PC-3 (cell line): ENCODE measurements at regions of chr17 and their contacts with region 1.

Region 1: DNA sequence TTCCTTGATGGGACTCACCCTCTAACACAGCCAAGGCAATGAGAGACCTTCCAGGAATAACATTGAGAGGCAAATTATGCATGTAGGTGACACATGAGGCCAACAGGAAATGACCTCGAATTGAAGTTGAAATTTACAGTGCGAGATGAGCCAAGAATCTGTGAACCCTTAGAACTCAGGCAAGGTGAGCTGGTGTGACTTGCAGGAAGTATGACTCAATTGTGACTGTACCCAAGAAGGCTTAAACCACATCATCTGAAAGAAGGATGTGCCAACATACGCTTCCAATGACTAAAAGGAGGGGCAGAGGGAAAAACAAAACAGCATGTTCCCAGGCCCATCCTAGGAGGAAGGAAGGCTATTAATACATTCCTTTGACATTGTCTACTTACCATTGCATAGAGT is 44.8 kb downstream of the PITPNC1 start:
- DNase-seq: peak; percentile 100
- ATAC-seq: peak; percentile 97
- H3K4me3 ChIP-seq: no peak overlapping the region
- H3K27ac ChIP-seq: peak overlapping the region; percentile 96
- H3K4me1 ChIP-seq: peaks cover 29% of the 10 kb centered on the region
- H3K27me3 ChIP-seq: no peaks in the 10 kb centered on the region
- CTCF ChIP-seq: no peak

Region 2: DNA sequence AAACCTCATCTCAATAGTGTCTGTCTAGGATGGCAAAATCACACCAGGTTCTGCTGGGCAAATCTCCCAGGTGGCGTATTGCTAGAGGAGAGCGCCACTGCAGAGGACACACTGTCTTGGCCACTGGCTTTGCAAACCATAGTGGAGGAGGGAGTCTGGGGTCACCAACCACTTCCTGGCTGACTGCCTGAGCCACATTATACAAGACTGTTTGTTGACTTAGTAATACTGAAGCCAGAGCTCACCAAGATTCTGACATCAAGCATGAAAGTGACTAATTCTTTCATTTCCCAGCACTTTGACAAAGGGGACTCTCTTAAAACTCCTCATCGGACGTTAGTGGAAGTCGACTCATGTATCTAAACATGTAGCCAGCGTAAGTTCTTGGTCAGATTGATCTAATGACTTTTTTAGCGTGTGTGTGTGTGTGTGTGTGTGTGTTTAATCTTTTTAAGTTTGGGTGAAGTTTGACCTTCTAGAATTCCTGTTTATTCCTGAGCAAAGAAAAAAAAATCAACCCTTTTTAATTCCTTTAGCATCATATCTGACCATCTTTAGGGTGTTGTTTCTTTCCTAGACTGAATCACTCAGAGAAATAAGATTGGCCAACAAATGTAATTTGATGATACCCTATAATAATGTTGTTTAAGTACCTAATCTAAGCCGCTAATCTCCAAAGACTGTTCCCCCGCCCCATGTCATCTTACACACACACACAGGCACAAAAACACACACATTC is 31.1 kb before region 1 on chr17:
- CTCF ChIA-PET with region 1: no interaction called
- POLR2A ChIA-PET with region 1: no interaction called
- intact Hi-C with region 1: loop called (anchors 1 kb)
- DNase-seq: peak; percentile 99
- ATAC-seq: peak; percentile 96
- H3K4me3 ChIP-seq: no peak overlapping the region
- H3K27ac ChIP-seq: peak overlapping the region; percentile 93
- H3K4me1 ChIP-seq: peaks cover 22% of the 10 kb centered on the region
- H3K27me3 ChIP-seq: no peaks in the 10 kb centered on the region
- CTCF ChIP-seq: peak; percentile 40

Region 3: DNA sequence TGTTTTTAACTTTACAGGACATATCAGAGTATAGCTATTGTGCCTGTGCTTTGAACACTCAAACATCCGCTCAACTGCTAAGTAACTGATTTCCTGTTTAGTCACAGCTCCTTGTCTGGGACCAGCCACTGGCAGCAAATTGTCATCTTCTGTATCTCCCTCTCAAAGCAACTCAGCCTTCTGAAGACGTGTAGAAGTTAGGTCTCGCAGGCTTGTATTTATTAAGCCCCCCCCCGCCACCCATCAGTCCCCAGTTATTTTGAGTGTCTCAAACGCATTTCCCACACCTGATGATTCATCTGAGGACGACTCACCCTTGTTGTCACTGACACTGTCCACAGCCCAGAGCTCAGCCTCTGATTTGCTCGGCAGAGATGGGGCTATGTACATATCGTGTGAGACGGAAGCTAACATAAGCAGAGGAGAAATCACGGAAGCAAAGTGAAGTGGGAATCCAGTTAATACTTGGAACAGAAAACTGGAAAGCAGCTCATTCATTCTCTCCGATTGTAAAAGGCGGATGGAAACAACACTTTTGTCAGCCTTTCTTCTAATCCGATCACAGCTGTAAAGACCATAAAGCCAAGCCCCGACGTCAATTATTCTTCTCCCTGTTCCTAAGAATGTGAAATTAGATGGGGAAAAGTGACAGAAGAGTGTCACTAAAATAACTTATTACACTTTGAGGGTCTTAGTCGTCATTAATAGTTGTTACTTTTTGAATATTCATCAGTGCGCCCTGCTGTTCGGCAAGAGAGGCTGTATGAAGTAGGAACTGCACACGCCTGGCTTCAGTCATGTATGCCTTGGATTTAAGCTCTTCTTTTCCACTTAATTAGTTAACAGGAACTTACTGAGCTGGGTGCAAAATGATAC is 19.4 kb after region 1 on chr17:
- CTCF ChIA-PET with region 1: no interaction called
- POLR2A ChIA-PET with region 1: interaction called, 11 read pairs
- intact Hi-C with region 1: loop called (anchors 1 kb)
- DNase-seq: peak; percentile 89
- ATAC-seq: peak; percentile 97
- H3K4me3 ChIP-seq: peak overlapping the region; percentile 38
- H3K27ac ChIP-seq: peak overlapping the region; percentile 91
- H3K4me1 ChIP-seq: peaks cover 17% of the 10 kb centered on the region
- H3K27me3 ChIP-seq: no peaks in the 10 kb centered on the region
- CTCF ChIP-seq: no peak

Region 4: GRCh38 chr17:67503184-67503583 is 81.3 kb after region 1 on chr17:
- CTCF ChIA-PET with region 1: no interaction called
- POLR2A ChIA-PET with region 1: no interaction called
- intact Hi-C with region 1: loop called (anchors 2 kb)
- DNase-seq: peak; percentile 99
- ATAC-seq: peak; percentile 96
- H3K4me3 ChIP-seq: no peak overlapping the region
- H3K27ac ChIP-seq: peak overlapping the region; percentile 74
- H3K4me1 ChIP-seq: peaks cover 28% of the 10 kb centered on the region
- H3K27me3 ChIP-seq: no peaks in the 10 kb centered on the region
- CTCF ChIP-seq: no peak